Esophagus muscularis mucosa (tissue), 4 donors: ENCODE measurements at regions of chr2 and their contacts with region 1.

Region 1: GRCh38 chr2:234135720-234136221 is 85.3 kb downstream of the SPP2 start:
- DNase-seq: no peak
- H3K4me3 ChIP-seq: no peak overlapping the region
- H3K27ac ChIP-seq: no peak overlapping the region
- H3K4me1 ChIP-seq: no peaks in the 10 kb centered on the region
- H3K27me3 ChIP-seq: peaks cover 0 to 20% (median 0%) of the 10 kb centered on the region in 4 donors
- CTCF ChIP-seq: peak; percentile 34 to 63 (median 61)
- EP300 ChIP-seq: no peak
- POLR2A ChIP-seq: no peak

Region 2: GRCh38 chr2:234241656-234242458 is 106.1 kb after region 1 on chr2:
- intact Hi-C with region 1: no loop called
- DNase-seq: no peak
- H3K4me3 ChIP-seq: no peak overlapping the region
- H3K27ac ChIP-seq: no peak overlapping the region
- H3K4me1 ChIP-seq: no peaks in the 10 kb centered on the region
- H3K27me3 ChIP-seq: no peaks in the 10 kb centered on the region
- CTCF ChIP-seq: no peak
- EP300 ChIP-seq: no peak
- POLR2A ChIP-seq: no peak

Region 3: DNA sequence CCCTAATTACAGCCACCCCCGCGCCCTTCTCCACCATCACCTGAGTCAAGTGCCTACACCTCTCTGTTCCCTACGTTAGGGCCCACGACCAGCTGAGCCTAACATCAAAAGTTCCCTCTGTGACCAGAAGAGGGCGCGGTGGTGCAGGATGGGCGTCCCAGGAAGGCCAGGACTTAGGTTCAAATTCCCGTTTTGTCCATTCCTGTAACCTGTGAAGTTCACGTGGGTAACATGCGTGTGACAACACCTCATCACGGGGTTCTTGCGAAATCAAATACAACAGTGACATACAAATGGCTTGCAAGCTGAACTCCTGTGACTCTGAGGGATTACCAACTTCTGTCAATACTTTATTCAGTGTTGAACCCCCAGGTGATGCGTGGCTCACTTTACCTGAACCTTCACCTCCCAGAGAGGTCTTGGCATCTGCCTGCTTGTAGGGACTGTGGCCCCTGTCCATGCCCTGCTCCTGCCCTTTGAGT is 153.2 kb after region 1 on chr2:
- intact Hi-C with region 1: loop called (anchors 10 kb)
- DNase-seq: no peak
- H3K4me3 ChIP-seq: no peak overlapping the region
- H3K27ac ChIP-seq: no peak overlapping the region
- H3K4me1 ChIP-seq: peaks cover 0 to 8% (median 0%) of the 10 kb centered on the region in 4 donors
- H3K27me3 ChIP-seq: no peaks in the 10 kb centered on the region
- CTCF ChIP-seq: peak; percentile 59 to 71 (median 62)
- EP300 ChIP-seq: no peak
- POLR2A ChIP-seq: no peak

Region 4: DNA sequence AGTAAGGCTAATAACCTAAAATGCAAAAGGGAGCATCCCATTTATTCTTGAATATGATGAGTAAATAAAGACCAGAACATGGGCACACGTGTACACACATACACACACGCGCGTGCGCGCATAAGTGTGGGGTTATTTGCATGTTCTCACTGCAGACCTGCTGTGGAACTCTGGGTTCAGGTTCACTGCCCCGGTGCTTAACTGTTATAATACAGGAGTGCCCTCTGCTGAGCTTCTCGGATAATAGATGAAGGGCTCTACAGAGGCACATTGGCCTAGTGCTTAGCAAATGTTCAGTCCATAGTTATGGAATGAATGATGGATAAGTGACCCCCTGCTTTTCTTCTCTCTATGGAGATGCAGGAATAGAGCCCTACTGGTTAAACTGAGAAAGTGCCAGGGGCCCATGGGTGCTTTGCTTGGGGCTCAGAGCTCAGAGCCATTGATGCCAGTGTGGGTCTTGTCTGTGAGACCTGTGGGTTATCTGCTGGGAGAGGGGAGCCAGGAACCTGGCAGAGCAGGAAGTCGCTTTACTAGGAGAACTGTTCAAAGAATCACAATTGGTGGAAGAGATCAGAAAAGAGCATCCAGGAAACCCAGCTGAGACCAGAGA is 364.7 kb after region 1 on chr2:
- intact Hi-C with region 1: loop called (anchors 2 kb)
- DNase-seq: no peak
- H3K4me3 ChIP-seq: no peak overlapping the region
- H3K27ac ChIP-seq: no peak overlapping the region
- H3K4me1 ChIP-seq: peaks cover 8 to 24% (median 15%) of the 10 kb centered on the region in 4 donors
- H3K27me3 ChIP-seq: peaks cover 0 to under 1% (median under 1%) of the 10 kb centered on the region in 4 donors
- CTCF ChIP-seq: peak; percentile 30 to 44 (median 40)
- EP300 ChIP-seq: no peak
- POLR2A ChIP-seq: no peak

Region 5: GRCh38 chr2:234544659-234545611 is 409.2 kb after region 1 on chr2:
- intact Hi-C with region 1: loop called (anchors 10 kb)
- DNase-seq: no peak
- H3K4me3 ChIP-seq: no peak overlapping the region
- H3K27ac ChIP-seq: no peak overlapping the region
- H3K4me1 ChIP-seq: peaks cover 0 to 9% (median 5%) of the 10 kb centered on the region in 4 donors
- H3K27me3 ChIP-seq: peaks cover 0 to 21% (median 0%) of the 10 kb centered on the region in 4 donors
- CTCF ChIP-seq: peak; percentile 65 to 97 (median 84)
- EP300 ChIP-seq: no peak
- POLR2A ChIP-seq: no peak

Region 6: GRCh38 chr2:235116885-235117492 is 981.2 kb after region 1 on chr2:
- intact Hi-C with region 1: loop called (anchors 5 kb)
- DNase-seq: no peak
- H3K4me3 ChIP-seq: no peak overlapping the region
- H3K27ac ChIP-seq: no peak overlapping the region
- H3K4me1 ChIP-seq: no peaks in the 10 kb centered on the region
- H3K27me3 ChIP-seq: peaks cover 0 to 6% (median 0%) of the 10 kb centered on the region in 4 donors
- CTCF ChIP-seq: peak; percentile 68 to 73 (median 72)
- EP300 ChIP-seq: no peak
- POLR2A ChIP-seq: no peak